ENCODE measurements at regions of chr3 and their contacts with region 1.

Region 1: GRCh38 chr3:177337541-177338331 is 140.5 kb upstream of the TBL1XR1 start:
- DNase-seq: no peak
- ATAC-seq: no peak
- H3K4me3 ChIP-seq: no peak overlapping the region
- H3K27ac ChIP-seq: no peak overlapping the region
- H3K4me1 ChIP-seq: peaks cover 51% of the 10 kb centered on the region
- H3K27me3 ChIP-seq: no peaks in the 10 kb centered on the region
- CTCF ChIP-seq: no peak

Region 2: GRCh38 chr3:177294221-177294620 is 43.5 kb before region 1 on chr3:
- intact Hi-C with region 1: no loop called
- DNase-seq: peak; percentile 53 to 70
- ATAC-seq: peak; percentile 96 to 99 (median 98)
- H3K4me3 ChIP-seq: no peak overlapping the region
- H3K27ac ChIP-seq: peak overlapping the region; percentile 83
- H3K4me1 ChIP-seq: peaks cover 11% of the 10 kb centered on the region
- H3K27me3 ChIP-seq: no peaks in the 10 kb centered on the region
- CTCF ChIP-seq: no peak

Region 3: DNA sequence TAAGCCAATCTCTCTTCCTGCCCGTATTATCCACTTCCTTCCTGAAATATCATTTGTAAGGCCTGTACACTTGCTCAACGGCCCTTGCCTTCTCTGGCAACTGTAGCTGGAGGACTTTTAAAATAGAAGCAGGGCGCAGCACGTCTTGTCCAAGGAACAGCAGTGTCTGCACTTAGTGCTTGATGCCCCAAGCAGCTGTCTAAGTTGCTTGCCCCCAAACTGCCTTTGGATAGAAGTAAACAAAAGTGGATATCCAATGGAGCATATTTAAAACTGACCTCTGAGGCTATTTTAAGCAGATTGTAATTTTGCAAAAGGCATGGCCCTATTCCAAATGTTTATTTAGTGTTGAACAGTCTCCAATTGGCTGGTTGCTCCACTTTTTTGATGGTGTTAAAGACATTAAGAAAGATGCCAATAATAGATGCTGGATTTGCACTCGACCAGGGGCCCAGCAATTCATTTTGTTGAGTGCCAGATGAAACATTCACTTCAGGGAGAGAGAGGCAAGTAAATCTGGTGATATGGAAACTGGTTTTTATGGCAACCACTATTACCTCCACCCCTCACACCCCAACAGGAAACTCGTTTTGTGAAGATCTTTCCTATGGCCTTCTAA is 386.4 kb after region 1 on chr3:
- intact Hi-C with region 1: loop called in 1 of 2 experiments (anchors 10 kb)
- DNase-seq: peak; percentile 72 to 89
- ATAC-seq: peak; percentile 94 to 97 (median 96)
- H3K4me3 ChIP-seq: no peak overlapping the region
- H3K27ac ChIP-seq: peak overlapping the region; percentile 82
- H3K4me1 ChIP-seq: peaks cover 55% of the 10 kb centered on the region
- H3K27me3 ChIP-seq: no peaks in the 10 kb centered on the region
- CTCF ChIP-seq: no peak

Measured in psoas muscle (tissue), 8 donors.